ENCODE measurements at regions of chr5 and their contacts with region 1.

Region 1: DNA sequence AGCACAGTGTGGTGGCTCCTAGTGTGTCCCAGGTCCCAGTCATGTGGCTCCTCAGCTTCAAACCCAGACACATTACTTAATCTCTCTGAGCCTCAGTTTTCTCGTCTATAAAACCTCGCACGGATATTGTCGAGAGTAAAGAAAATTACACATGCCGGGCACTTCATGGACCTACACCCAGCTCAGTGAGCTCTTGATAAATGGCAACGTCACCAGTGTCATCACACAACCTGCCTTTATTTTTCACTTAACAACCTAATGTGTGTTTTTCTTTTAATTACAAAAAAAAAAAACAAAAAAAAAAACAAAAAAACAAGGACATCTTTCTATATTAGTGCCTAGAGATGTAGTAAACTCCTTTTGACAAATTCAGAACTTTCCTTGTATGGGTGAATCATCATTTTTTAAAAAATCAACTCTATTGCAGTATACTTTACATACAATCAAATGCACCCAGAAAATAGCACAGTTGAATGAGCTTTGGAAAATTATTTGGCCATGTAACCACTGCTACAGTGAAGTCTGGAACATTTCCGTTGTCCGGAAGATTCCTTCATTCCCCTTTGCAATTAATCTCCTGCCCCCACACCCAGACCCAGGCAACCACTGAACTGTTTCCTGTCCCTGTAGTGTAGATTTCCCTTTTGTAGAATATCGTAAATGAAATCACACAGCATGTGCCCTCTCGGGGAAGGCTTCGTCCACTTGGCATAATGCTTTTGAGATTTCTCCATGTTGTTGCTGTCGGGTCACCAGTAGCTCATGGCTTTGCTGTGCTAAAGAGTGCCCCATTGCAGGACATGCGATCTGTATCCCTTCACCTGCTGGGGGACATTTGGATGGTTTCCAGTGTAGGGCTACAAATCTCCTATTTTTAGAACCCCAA is 100.4 kb upstream of the LARP1 start:
- DNase-seq: no peak
- ATAC-seq: no peak
- H3K4me3 Mint-ChIP-seq: no peak overlapping the region
- H3K27ac Mint-ChIP-seq: no peak overlapping the region
- H3K4me1 Mint-ChIP-seq: peaks cover 5% of the 10 kb centered on the region
- H3K27me3 Mint-ChIP-seq: no peaks in the 10 kb centered on the region

Region 2: DNA sequence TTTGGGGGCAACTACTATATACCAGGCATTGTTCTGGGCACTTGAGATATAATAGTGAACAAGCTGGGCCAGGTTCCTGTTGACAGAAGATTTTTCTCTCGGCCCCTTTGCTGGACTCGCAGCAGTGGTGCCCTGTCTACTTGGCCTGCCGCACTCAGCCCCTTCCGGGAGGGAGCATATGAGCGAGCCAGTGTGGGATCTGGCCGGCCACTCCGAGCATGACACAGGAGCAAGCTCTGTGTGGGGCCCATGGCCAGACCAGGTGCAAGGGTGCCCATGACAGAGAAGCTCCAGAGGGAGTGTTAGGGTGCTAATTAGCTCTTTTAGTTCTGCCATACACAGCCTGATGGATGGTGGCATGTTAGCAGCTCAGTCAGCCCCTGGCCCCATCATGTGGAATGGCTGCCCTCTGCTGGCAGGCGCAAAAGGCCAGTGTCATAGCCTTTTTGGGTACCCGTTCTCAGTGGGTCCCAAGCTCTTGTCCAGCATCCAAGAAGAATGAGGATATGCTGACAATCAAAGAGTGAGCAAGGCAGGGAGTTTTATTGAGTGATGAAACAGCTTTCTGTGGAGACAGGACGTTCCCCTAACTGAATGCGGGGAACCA is 349.5 kb after region 1 on chr5:
- CTCF ChIA-PET with region 1: interaction called, 10 read pairs
- POLR2A ChIA-PET with region 1: no interaction called
- intact Hi-C with region 1: loop called in 1 of 2 experiments (anchors 10 kb)
- DNase-seq: peak; percentile 60
- ATAC-seq: peak; percentile 51
- H3K4me3 Mint-ChIP-seq: no peak overlapping the region
- H3K27ac Mint-ChIP-seq: no peak overlapping the region
- H3K4me1 Mint-ChIP-seq: no peaks in the 10 kb centered on the region
- H3K27me3 Mint-ChIP-seq: peaks cover 19% of the 10 kb centered on the region

Region 3: GRCh38 chr5:155147222-155147621 is 492.5 kb after region 1 on chr5:
- CTCF ChIA-PET with region 1: no interaction called
- POLR2A ChIA-PET with region 1: no interaction called
- intact Hi-C with region 1: loop called in 1 of 2 experiments (anchors 5 kb)
- DNase-seq: no peak
- ATAC-seq: no peak
- H3K4me3 Mint-ChIP-seq: no peak overlapping the region
- H3K27ac Mint-ChIP-seq: no peak overlapping the region
- H3K4me1 Mint-ChIP-seq: no peaks in the 10 kb centered on the region
- H3K27me3 Mint-ChIP-seq: peaks cover 6% of the 10 kb centered on the region

Measured in activated CD4-positive, alpha-beta T cell treated with anti-CD3 and anti-CD28 coated beads for 36 hours (primary cell).